ENCODE measurements at regions of chr6 and their contacts with region 1.

Region 1: GRCh38 chr6:100176311-100176950 is 182.4 kb upstream of the MCHR2 start:
- DNase-seq: peak; percentile 70
- ATAC-seq: peak; percentile 66
- H3K4me3 ChIP-seq: peak overlapping the region; percentile 23; the same call in 1 of the 2 replicates
- H3K27ac ChIP-seq: peak overlapping the region; percentile 99
- H3K4me1 ChIP-seq: peaks cover 49% of the 10 kb centered on the region
- H3K27me3 ChIP-seq: no peaks in the 10 kb centered on the region
- CTCF ChIP-seq: peak; percentile 68

Region 2: GRCh38 chr6:100105138-100105753 is 71.2 kb before region 1 on chr6:
- CTCF ChIA-PET with region 1: no interaction called
- POLR2A ChIA-PET with region 1: no interaction called
- intact Hi-C with region 1: loop called (anchors 2 kb)
- DNase-seq: no peak
- ATAC-seq: no peak
- H3K4me3 ChIP-seq: no peak overlapping the region
- H3K27ac ChIP-seq: no peak overlapping the region
- H3K4me1 ChIP-seq: peaks cover 27% of the 10 kb centered on the region
- H3K27me3 ChIP-seq: no peaks in the 10 kb centered on the region
- CTCF ChIP-seq: no peak

Region 3: DNA sequence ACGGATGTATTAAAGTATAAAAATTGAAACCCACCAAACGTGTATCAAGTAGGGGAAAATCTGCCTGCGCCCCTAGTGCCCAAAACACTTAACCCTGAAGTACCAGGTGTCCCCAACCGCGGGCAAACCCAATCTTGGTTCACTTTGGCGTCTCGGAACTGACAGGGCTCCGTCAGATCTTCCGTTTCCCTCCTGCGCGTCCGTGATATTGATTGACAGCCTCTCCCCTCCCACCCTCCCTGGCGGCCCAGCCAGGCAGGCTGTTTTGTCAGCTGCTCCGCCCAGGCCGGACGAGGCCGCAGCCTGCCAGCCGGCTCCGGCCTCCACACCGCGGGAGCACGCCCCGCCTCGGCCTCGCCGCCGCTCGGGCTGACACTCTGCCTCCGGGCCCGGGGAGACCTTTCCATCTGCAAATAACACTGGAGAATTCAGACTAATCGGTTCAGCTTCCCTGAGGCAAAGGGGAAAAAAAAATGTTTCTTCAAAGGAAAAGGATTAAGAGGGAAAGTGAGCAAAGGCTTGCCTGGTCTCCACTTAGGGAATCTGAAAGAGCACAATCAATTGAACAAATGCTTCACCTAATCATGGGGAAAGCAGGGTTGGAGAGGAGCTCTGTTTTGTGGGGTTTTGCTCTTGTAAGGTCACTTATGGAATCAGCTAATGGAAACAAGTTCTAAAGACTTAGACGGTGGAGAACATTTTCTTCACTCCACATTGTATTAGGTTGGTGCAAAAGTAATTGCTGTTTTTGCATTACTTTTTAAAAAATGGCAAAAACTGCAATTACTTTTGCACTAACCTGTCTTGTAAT is 52.6 kb after region 1 on chr6:
- CTCF ChIA-PET with region 1: no interaction called
- POLR2A ChIA-PET with region 1: no interaction called
- intact Hi-C with region 1: loop called (anchors 2 kb)
- DNase-seq: peak; percentile 78
- ATAC-seq: peak; percentile 98
- H3K4me3 ChIP-seq: peak overlapping the region; percentile 71
- H3K27ac ChIP-seq: peak overlapping the region; percentile 20; the same call in 1 of the 2 replicates
- H3K4me1 ChIP-seq: peaks cover 41% of the 10 kb centered on the region
- H3K27me3 ChIP-seq: no peaks in the 10 kb centered on the region
- CTCF ChIP-seq: no peak; the same call in 1 of the 2 replicates

Region 4: GRCh38 chr6:100472674-100473073 is 296.2 kb after region 1 on chr6:
- CTCF ChIA-PET with region 1: no interaction called
- POLR2A ChIA-PET with region 1: no interaction called
- intact Hi-C with region 1: loop called (anchors 1 kb)
- DNase-seq: peak; percentile 80
- ATAC-seq: peak; percentile 72
- H3K4me3 ChIP-seq: no peak overlapping the region
- H3K27ac ChIP-seq: no peak overlapping the region
- H3K4me1 ChIP-seq: peaks cover 25% of the 10 kb centered on the region
- H3K27me3 ChIP-seq: no peaks in the 10 kb centered on the region
- CTCF ChIP-seq: no peak

Region 5: GRCh38 chr6:100664274-100665040 is 488.0 kb after region 1 on chr6:
- CTCF ChIA-PET with region 1: no interaction called
- POLR2A ChIA-PET with region 1: no interaction called
- intact Hi-C with region 1: loop called (anchors 5 kb)
- DNase-seq: peak; percentile 41
- ATAC-seq: no peak
- H3K4me3 ChIP-seq: no peak overlapping the region
- H3K27ac ChIP-seq: no peak overlapping the region
- H3K4me1 ChIP-seq: peaks cover 13% of the 10 kb centered on the region
- H3K27me3 ChIP-seq: no peaks in the 10 kb centered on the region
- CTCF ChIP-seq: peak; percentile 55